MCF 10A (cell line): ENCODE measurements at regions of chr3 and their contacts with region 1.

Region 1: GRCh38 chr3:185983495-185984141 is 45.8 kb upstream of the TRA2B start:
- DNase-seq: peak; percentile 85
- H3K4me3 Mint-ChIP-seq: no peak overlapping the region
- H3K27ac Mint-ChIP-seq: no peak overlapping the region
- H3K4me1 Mint-ChIP-seq: peaks cover 12% of the 10 kb centered on the region
- H3K27me3 Mint-ChIP-seq: no peaks in the 10 kb centered on the region
- CTCF ChIP-seq: peak; percentile 90

Region 2: GRCh38 chr3:185995352-185995751 is 11.7 kb after region 1 on chr3:
- CTCF ChIA-PET with region 1: interaction called, 11 read pairs
- POLR2A ChIA-PET with region 1: interaction called, 3 read pairs
- intact Hi-C with region 1: no loop called
- DNase-seq: peak; percentile 51
- H3K4me3 Mint-ChIP-seq: no peak overlapping the region
- H3K27ac Mint-ChIP-seq: no peak overlapping the region
- H3K4me1 Mint-ChIP-seq: peaks cover 8% of the 10 kb centered on the region
- H3K27me3 Mint-ChIP-seq: peaks cover 10% of the 10 kb centered on the region
- CTCF ChIP-seq: no peak

Region 3: GRCh38 chr3:186108941-186109865 is 125.6 kb after region 1 on chr3 and contains the start of gene ETV5:
- CTCF ChIA-PET with region 1: interaction called, 3 read pairs
- POLR2A ChIA-PET with region 1: interaction called, 3 read pairs
- intact Hi-C with region 1: loop called (anchors 2 kb)
- DNase-seq: peak; percentile 99
- H3K4me3 Mint-ChIP-seq: peak within 1 kb of the TSS; percentile 95
- H3K27ac Mint-ChIP-seq: peak within 1 kb of the TSS; percentile 90
- H3K4me1 Mint-ChIP-seq: peaks cover 25% of the 10 kb centered on the region
- H3K27me3 Mint-ChIP-seq: no peaks in the 10 kb centered on the region
- CTCF ChIP-seq: no peak
- total RNA-seq, gene ETV5: 93.0 and 101 TPM in 2 replicates

Region 4: DNA sequence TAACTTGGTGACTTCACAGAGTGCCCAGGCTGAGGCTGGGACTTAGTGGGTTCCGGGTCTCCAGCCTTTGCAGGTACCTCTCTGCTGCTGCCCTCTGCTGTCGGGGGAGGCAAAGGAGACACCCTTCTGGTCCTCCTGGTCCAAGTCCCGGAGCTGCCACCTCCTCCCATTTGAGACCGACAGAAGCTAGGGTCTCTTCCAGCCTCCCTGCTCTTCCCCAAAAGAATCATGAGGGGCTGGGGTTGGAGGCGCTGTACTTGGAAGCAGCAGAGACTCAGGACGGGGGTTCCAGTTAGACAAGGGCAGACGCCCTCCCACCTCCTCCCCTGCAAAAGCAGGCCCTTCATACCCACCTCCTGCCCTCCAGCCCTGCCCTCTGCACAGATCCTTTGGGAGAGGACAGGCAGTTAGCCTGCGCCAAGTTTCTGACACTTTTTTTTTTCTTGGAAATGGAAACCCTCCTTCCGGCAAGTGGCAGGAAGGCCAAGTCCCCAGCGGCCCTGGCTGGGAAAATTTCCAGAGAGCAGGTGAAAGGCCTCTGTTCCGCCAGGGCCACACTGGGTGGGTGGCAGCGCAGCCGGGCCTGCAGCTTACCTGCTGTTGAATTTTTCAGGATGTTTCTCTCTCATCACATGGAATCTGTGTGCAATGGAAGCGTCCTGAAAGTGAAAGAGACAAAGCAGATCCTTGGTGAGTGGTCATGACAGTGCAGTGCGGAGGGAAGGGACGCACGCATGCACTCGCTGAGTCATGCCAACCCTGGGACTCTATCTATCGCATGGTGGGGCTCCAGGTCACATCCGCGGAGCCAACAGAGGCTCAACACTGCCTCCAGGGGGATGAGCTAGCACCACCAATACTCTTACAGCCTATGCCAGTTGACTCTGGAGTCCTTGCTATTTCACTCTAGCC is 258.5 kb after region 1 on chr3:
- CTCF ChIA-PET with region 1: interaction called, 3 read pairs
- POLR2A ChIA-PET with region 1: interaction called, 3 read pairs
- intact Hi-C with region 1: loop called (anchors 1 kb)
- DNase-seq: peak; percentile 76
- H3K4me3 Mint-ChIP-seq: no peak overlapping the region
- H3K27ac Mint-ChIP-seq: no peak overlapping the region
- H3K4me1 Mint-ChIP-seq: no peaks in the 10 kb centered on the region
- H3K27me3 Mint-ChIP-seq: no peaks in the 10 kb centered on the region
- CTCF ChIP-seq: peak; percentile 42

Region 5: DNA sequence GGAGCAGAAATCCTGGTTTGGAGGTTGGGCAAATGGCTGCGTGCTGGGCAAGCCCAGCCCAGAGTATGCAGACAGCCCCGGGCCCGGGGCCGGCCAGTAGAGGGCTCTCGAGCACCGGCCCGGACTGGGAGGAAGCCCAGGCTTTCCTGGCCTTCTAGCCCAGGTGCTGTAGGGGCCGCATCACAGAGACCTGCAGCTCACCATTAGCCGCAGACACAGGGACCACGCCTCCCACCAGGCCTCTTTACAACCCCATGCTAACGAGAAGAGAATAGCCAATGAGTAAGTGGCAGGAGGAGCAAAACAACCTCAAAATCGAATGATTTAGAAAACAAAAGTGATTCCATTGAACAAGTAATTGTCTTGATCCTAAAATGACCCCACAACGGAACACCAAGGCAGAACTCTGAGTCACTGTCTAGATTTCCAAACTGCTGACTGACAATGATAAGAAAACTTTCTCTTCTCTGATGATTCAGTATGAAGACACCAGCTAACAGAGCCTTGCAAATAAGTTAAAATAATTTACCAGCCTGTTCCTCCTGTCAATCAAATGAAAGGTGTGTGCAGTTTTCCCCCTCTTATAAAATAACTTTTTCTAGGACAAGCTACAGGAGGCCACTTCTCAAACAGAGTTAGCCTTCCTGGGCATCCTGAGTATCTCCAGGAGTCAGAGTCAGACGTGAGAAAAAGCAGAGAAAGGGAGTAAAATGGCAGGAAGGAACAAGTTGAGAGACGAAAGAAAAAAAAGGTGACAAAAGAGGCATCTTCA is 276.2 kb after region 1 on chr3:
- CTCF ChIA-PET with region 1: interaction called, 12 read pairs
- POLR2A ChIA-PET with region 1: no interaction called
- intact Hi-C with region 1: loop called (anchors 1 kb)
- DNase-seq: peak; percentile 75
- H3K4me3 Mint-ChIP-seq: no peak overlapping the region
- H3K27ac Mint-ChIP-seq: no peak overlapping the region
- H3K4me1 Mint-ChIP-seq: peaks cover 14% of the 10 kb centered on the region
- H3K27me3 Mint-ChIP-seq: peaks cover 11% of the 10 kb centered on the region
- CTCF ChIP-seq: peak; percentile 78

Region 6: DNA sequence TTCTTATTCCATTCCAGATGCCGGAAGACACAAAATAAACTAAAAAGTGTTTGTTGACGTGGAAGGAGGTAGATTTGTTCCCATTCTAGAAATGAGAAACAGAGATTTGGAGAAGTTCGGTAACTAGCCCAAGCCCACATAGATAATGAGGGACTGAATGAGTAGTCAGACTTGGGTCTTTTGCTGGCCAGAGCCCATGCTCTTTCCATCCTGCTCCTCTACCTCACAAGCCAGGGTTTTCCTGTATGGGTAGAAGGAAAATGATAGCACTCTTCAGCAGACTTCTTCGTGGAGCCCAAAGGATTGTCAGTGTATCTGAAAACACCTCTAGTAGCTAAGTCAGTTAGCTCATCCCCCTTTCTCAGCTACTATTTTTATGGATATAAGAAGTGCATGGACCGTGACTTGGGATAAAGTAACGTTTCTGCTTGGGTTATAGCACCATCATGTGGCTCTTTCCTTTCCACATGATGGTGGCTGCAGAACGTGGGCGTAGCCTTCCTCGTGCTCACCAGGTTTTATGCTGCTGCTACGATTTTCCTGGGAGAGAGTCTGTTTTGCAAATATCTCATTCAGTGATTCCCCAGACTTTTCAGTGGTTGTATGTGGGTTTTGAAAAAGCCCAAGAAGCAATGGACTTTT is 293.8 kb after region 1 on chr3:
- CTCF ChIA-PET with region 1: interaction called, 6 read pairs
- POLR2A ChIA-PET with region 1: no interaction called
- intact Hi-C with region 1: loop called (anchors 1 kb)
- DNase-seq: peak; percentile 54
- H3K4me3 Mint-ChIP-seq: no peak overlapping the region
- H3K27ac Mint-ChIP-seq: no peak overlapping the region
- H3K4me1 Mint-ChIP-seq: no peaks in the 10 kb centered on the region
- H3K27me3 Mint-ChIP-seq: peaks cover 16% of the 10 kb centered on the region
- CTCF ChIP-seq: peak; percentile 26

Region 7: GRCh38 chr3:186330772-186331460 is 347.3 kb after region 1 on chr3:
- CTCF ChIA-PET with region 1: no interaction called
- POLR2A ChIA-PET with region 1: no interaction called
- intact Hi-C with region 1: no loop called
- DNase-seq: no peak
- H3K4me3 Mint-ChIP-seq: no peak overlapping the region
- H3K27ac Mint-ChIP-seq: no peak overlapping the region
- H3K4me1 Mint-ChIP-seq: no peaks in the 10 kb centered on the region
- H3K27me3 Mint-ChIP-seq: peaks cover 65% of the 10 kb centered on the region
- CTCF ChIP-seq: no peak

Region 8: GRCh38 chr3:186821429-186822367 is 838.1 kb after region 1 on chr3:
- CTCF ChIA-PET with region 1: interaction called, 3 read pairs
- POLR2A ChIA-PET with region 1: no interaction called
- intact Hi-C with region 1: loop called (anchors 5 kb)
- DNase-seq: peak; percentile 78
- H3K4me3 Mint-ChIP-seq: no peak overlapping the region
- H3K27ac Mint-ChIP-seq: no peak overlapping the region
- H3K4me1 Mint-ChIP-seq: peaks cover 19% of the 10 kb centered on the region
- H3K27me3 Mint-ChIP-seq: no peaks in the 10 kb centered on the region
- CTCF ChIP-seq: peak; percentile 66